CD8-positive, alpha-beta T cell (primary cell): ENCODE measurements at regions of chr1 and their contacts with region 1.

Region 1: DNA sequence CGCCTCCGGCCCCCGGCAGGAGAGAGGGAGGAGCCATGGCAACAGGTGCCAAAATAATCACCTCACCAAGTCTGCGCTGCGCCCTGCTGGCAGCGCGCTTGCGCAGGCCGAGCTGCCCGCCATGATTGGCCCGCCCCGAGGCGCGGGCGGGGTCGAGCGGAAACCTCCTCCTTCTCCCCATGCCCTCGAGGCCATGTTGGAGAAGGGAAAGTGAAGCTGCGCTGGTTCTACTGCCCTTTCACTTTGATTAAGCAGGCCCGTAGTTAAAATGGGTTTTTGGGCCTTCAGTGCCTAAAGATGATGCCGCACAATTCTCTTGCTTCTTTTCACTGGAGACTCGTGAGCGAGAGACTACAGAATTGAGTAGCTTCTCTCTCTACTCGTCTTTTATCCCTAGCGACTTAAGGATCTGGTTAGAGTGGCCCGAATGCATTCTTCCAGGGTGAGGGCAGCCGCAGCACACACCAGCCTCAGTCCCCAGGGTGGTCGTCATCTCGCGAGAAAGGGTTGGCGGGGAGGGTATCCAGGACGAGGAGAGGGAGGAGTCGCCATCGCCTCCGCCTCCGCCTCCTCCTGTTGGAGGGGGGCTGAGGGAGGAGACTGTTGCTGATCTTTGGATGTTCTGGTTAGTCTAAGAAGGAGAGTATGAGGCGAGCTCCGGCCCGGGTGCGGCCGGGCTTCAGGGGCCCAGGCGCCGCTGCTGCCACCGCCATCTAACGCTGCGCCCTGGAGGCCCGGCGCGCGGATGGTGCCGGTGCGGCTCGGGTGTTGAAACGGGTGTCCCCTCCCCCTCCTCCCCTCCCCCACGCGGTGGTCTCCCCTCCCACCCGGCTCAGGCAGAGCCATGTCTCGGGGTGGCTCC is at the start of gene DCAF6:
- DNase-seq: peak; percentile 93 to 100 (median 97)
- ATAC-seq: peak; percentile 78
- H3K4me3 ChIP-seq: peak within 1 kb of the TSS; percentile 85 to 86
- H3K4me3 Mint-ChIP-seq: peak within 1 kb of the TSS; percentile 89
- H3K27ac ChIP-seq: peak within 1 kb of the TSS; percentile 91 to 96
- H3K27ac Mint-ChIP-seq: peak within 1 kb of the TSS; percentile 93
- H3K4me1 ChIP-seq: peaks cover 29% of the 10 kb centered on the region
- H3K4me1 Mint-ChIP-seq: peaks cover 54% of the 10 kb centered on the region
- H3K27me3 ChIP-seq: no peaks in the 10 kb centered on the region
- H3K27me3 Mint-ChIP-seq: no peaks in the 10 kb centered on the region
- CTCF ChIP-seq: no peak
- total RNA-seq, gene DCAF6: 12.4 to 13.0 TPM

Region 2: DNA sequence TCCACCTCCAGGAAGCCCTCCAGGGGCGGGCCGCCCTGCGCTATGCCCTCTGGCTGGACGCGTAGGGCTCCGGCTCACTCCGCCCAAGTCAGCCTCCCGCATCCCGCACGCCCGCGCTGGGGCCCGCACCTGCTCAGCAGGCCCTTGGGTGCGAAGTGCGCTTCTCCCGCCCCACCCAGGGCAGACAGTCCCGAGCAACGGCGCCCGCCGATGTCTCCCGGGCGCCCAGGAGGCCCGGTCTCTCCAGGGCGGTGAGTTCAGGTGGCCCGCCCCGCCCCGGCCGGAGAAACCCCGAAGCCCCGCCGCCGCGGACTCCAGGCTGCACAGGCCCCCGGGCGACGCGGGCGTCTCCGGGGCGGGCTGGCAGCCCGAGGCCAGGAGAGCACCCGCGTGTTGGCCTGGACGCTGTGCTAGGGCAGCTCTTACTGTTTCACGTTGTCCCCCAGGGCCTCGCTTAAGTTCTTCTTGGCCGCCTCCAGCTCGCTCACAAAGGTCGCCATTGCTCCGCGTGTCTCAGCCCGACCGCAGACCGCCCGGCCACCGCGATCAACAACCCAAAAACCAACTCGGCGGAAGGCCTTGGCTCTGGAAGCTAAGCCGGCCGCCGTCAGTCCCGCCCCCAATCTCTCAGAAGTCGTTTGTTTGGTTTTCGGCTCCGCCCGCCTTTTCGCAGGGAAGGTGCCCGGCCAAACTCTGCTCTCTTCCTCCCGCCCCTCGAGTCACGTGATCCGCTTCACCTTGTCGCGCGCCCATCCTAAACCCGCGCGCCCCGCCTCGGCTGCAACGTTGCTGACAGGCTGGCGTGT is 1060.4 kb before region 1 on chr1 and contains the start of gene TADA1:
- CTCF ChIA-PET with region 1: no interaction called
- POLR2A ChIA-PET with region 1: no interaction called
- intact Hi-C with region 1: loop called in 1 of 2 experiments (anchors 5 kb)
- DNase-seq: peak; percentile 96 to 99 (median 98)
- ATAC-seq: peak; percentile 90
- H3K4me3 ChIP-seq: peak within 1 kb of the TSS; percentile 71 to 84
- H3K4me3 Mint-ChIP-seq: peak within 1 kb of the TSS; percentile 97
- H3K27ac ChIP-seq: peak within 1 kb of the TSS; percentile 74 to 79
- H3K27ac Mint-ChIP-seq: peak within 1 kb of the TSS; percentile 99
- H3K4me1 ChIP-seq: peaks cover 18% of the 10 kb centered on the region
- H3K4me1 Mint-ChIP-seq: peaks cover 49% of the 10 kb centered on the region
- H3K27me3 ChIP-seq: no peaks in the 10 kb centered on the region
- H3K27me3 Mint-ChIP-seq: no peaks in the 10 kb centered on the region
- CTCF ChIP-seq: no peak
- total RNA-seq, gene TADA1: 16.7 to 18.5 TPM

Region 3: GRCh38 chr1:167635156-167635648 is 301.1 kb before region 1 on chr1:
- CTCF ChIA-PET with region 1: no interaction called
- POLR2A ChIA-PET with region 1: interaction called, 4 read pairs
- intact Hi-C with region 1: loop called in 1 of 2 experiments (anchors 5 kb)
- DNase-seq: peak in 1 of 9 experiments; percentile 46
- ATAC-seq: no peak
- H3K4me3 ChIP-seq: no peak overlapping the region
- H3K4me3 Mint-ChIP-seq: peak overlapping the region; percentile 8
- H3K27ac ChIP-seq: peak overlapping the region in 1 of 2 experiments; percentile 5
- H3K27ac Mint-ChIP-seq: peak overlapping the region; percentile 97
- H3K4me1 ChIP-seq: peaks cover 76% of the 10 kb centered on the region
- H3K4me1 Mint-ChIP-seq: peaks cover 88% of the 10 kb centered on the region
- H3K27me3 ChIP-seq: no peaks in the 10 kb centered on the region
- H3K27me3 Mint-ChIP-seq: no peaks in the 10 kb centered on the region
- CTCF ChIP-seq: no peak

Region 4: DNA sequence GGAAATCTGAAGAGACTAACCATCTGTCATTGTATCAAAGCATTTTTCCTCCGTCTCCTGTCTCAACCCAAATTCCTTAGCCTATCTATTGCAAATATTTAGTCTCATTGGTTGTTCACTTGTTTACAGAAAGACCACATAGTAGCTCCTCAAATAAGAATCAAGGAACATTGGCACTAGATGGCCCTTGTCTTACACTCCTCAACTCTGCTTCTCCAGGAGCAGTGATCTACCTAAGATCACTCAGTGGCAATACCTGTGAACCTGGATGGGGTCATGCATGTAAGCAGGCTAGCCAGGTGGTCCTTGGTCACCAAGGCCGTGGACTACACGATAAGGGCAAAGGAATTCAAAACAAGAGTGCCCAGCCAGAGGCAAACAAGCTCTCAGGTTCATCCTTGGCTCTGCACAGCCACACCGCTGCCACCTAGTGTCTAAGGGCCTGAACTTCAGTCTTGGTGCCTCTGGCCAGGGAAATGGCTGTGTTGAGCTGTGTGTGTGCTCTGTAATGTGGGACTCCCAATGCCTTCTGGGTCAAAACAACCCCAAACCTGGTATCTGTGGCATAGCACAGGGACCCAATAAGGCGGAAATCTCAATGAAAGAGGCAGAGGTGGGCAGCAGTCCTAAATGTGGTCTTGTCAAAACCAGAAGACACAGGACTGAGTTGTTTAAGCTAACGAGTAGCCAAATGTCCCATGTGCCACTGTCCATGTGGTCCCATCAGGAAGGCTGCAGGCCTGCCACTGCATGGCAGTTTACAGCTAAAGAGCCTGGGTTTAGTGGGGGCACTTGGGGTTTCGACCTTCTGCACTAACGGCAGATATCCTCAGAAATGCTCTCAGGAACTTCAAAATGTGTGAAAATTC is 145.9 kb after region 1 on chr1:
- CTCF ChIA-PET with region 1: interaction called, 3 read pairs
- POLR2A ChIA-PET with region 1: interaction called, 6 read pairs
- intact Hi-C with region 1: loop called in 1 of 2 experiments (anchors 2 kb)
- DNase-seq: peak; percentile 28 to 74 (median 60)
- ATAC-seq: peak; percentile 95
- H3K4me3 ChIP-seq: no peak overlapping the region
- H3K4me3 Mint-ChIP-seq: no peak overlapping the region
- H3K27ac ChIP-seq: no peak overlapping the region
- H3K27ac Mint-ChIP-seq: no peak overlapping the region
- H3K4me1 ChIP-seq: no peaks in the 10 kb centered on the region
- H3K4me1 Mint-ChIP-seq: peaks cover 5% of the 10 kb centered on the region
- H3K27me3 ChIP-seq: no peaks in the 10 kb centered on the region
- H3K27me3 Mint-ChIP-seq: no peaks in the 10 kb centered on the region
- CTCF ChIP-seq: peak; percentile 83

Region 5: GRCh38 chr1:168225476-168226190 is 289.3 kb after region 1 on chr1 and contains the start of gene SFT2D2:
- CTCF ChIA-PET with region 1: no interaction called
- POLR2A ChIA-PET with region 1: no interaction called
- intact Hi-C with region 1: loop called in 1 of 2 experiments (anchors 1 kb)
- DNase-seq: peak; percentile 46 to 89 (median 77)
- ATAC-seq: peak; percentile 98
- H3K4me3 ChIP-seq: peak within 1 kb of the TSS; percentile 90 to 93
- H3K4me3 Mint-ChIP-seq: peak within 1 kb of the TSS; percentile 94
- H3K27ac ChIP-seq: peak within 1 kb of the TSS; percentile 71 to 75
- H3K27ac Mint-ChIP-seq: peak within 1 kb of the TSS; percentile 93
- H3K4me1 ChIP-seq: peaks cover 37% of the 10 kb centered on the region
- H3K4me1 Mint-ChIP-seq: peaks cover 49% of the 10 kb centered on the region
- H3K27me3 ChIP-seq: no peaks in the 10 kb centered on the region
- H3K27me3 Mint-ChIP-seq: peaks cover 3% of the 10 kb centered on the region
- CTCF ChIP-seq: no peak
- total RNA-seq, gene SFT2D2: 61.2 to 62.3 TPM

Region 6: GRCh38 chr1:169485544-169486278 is 1549.4 kb after region 1 on chr1 and contains the start of gene SLC19A2:
- CTCF ChIA-PET with region 1: no interaction called
- POLR2A ChIA-PET with region 1: no interaction called
- intact Hi-C with region 1: loop called in 1 of 2 experiments (anchors 5 kb)
- DNase-seq: peak; percentile 84 to 97 (median 93)
- ATAC-seq: peak; percentile 98
- H3K4me3 ChIP-seq: peak within 1 kb of the TSS; percentile 69 to 79
- H3K4me3 Mint-ChIP-seq: peak within 1 kb of the TSS; percentile 97
- H3K27ac ChIP-seq: peak within 1 kb of the TSS; percentile 73 to 79
- H3K27ac Mint-ChIP-seq: peak within 1 kb of the TSS; percentile 95
- H3K4me1 ChIP-seq: peaks cover 20% of the 10 kb centered on the region
- H3K4me1 Mint-ChIP-seq: peaks cover 43% of the 10 kb centered on the region
- H3K27me3 ChIP-seq: no peaks in the 10 kb centered on the region
- H3K27me3 Mint-ChIP-seq: no peaks in the 10 kb centered on the region
- CTCF ChIP-seq: no peak
- total RNA-seq, gene SLC19A2: 4.7 to 6.1 TPM